Naive thymus-derived CD4-positive, alpha-beta T cell (primary cell): ENCODE measurements at regions of chr3 and their contacts with region 1.

Region 1: DNA sequence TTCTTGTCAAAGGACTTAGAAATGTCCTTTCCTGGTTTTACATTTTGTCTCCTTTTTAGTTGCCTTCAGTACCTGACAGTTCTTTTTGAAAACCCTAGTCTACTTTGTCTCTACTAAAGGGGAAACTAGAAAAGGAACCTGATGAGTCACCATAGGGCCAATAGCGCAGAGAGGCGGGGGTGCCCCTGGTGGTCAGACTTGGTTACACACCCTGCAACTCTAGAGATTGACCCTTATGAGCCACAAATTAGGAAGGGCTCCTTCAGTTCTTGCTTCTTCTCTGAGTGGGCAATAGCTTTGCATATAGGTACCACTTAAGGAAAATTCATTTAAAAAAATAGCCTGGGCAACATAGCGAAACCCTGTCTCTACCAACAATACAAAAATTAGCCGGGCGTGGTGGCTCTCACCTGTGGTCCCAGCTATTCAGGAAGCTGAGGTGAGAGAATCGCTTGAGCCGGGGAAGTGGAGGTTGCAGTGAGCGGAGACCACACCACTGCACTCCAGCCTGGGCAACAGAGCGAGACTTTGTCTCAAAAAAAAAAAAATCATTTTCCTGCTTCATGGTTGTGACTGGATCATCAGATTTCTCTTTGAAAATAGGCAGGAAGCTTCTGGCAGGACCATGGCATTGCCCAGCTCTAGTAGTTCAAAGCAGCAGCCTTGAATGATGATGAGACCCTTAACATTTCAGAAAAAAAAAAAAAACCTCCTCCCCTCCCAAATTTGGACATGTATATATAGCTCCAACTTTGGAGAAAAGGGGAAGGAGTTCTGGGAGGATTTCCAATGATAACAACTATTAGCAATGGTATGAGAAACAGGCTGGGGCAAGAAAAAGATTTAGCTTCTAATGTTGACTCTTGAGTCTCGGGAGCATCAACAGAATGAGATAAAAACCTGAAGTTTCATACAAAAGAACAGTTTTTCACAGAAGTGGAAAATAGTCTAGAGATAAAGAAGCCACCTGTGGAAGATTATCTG is 45.2 kb upstream of the RASA2 start:
- DNase-seq: peak; percentile 29 to 68 (median 64)
- ATAC-seq: peak; percentile 97
- H3K4me3 ChIP-seq: no peak overlapping the region
- H3K4me3 Mint-ChIP-seq: no peak overlapping the region
- H3K27ac ChIP-seq: no peak overlapping the region
- H3K27ac Mint-ChIP-seq: peak overlapping the region in 6 of 9 donors; percentile 14 to 79 (median 42)
- H3K4me1 ChIP-seq: peaks cover 0 to 13% of the 10 kb centered on the region in 2 donors
- H3K4me1 Mint-ChIP-seq: peaks cover 9 to 24% (median 24%) of the 10 kb centered on the region in 7 donors
- H3K27me3 ChIP-seq: no peaks in the 10 kb centered on the region
- H3K27me3 Mint-ChIP-seq: no peaks in the 10 kb centered on the region

Region 2: DNA sequence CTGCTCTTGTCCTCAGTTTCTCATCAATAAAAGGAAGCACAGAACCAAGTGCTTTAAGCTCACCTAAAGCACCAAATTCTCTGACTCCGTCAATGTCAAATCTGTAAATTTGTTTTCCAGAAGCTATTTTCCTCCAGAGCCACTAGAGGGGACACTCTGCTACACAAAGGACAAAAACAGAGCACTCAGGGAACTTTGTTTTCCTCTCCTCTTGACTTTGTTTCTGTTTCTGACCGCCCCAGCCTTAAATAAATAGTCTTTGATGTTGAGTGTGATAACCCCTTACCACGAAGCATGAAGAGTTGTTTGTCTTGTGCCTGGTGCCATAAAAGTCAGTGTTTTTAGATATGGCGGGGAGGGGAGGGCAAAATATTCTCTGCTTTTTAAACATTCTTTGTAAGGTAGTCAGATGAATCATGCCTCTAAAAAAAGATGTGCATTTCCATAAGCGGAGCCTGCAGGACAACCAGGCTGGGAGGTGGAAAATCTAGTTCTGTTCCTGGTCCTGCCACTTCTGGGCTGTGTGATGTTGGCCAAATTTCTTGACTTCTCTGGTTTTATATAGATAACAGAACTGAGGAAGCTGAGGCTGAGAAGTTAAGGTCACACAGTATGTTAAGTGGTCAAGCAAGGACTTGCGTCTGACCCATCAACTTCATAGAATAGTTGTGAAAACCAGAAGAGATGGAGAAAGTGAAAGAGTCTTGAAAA is 80.6 kb before region 1 on chr3:
- CTCF ChIA-PET with region 1: interaction called, 25 read pairs
- POLR2A ChIA-PET with region 1: interaction called, 5 read pairs
- intact Hi-C with region 1: loop called (anchors 1 kb)
- DNase-seq: peak in 7 of 9 donors; percentile 20 to 56 (median 45)
- ATAC-seq: peak; percentile 83
- H3K4me3 ChIP-seq: no peak overlapping the region
- H3K4me3 Mint-ChIP-seq: peak overlapping the region in 4 of 10 donors; percentile 16 to 40 (median 28)
- H3K27ac ChIP-seq: no peak overlapping the region
- H3K27ac Mint-ChIP-seq: peak overlapping the region in 2 of 9 donors; percentile 26 to 51
- H3K4me1 ChIP-seq: no peaks in the 10 kb centered on the region
- H3K4me1 Mint-ChIP-seq: peaks cover 5 to 9% (median 7%) of the 10 kb centered on the region in 7 donors
- H3K27me3 ChIP-seq: no peaks in the 10 kb centered on the region
- H3K27me3 Mint-ChIP-seq: peaks cover 0 to 11% (median 0%) of the 10 kb centered on the region in 5 donors

Region 3: GRCh38 chr3:141402476-141403171 is 39.0 kb before region 1 on chr3:
- CTCF ChIA-PET with region 1: interaction called, 11 read pairs
- POLR2A ChIA-PET with region 1: interaction called, 4 read pairs
- intact Hi-C with region 1: loop called (anchors 1 to 5 kb)
- DNase-seq: peak; percentile 35 to 62 (median 51)
- ATAC-seq: peak; percentile 70
- H3K4me3 ChIP-seq: peak overlapping the region; percentile 80
- H3K4me3 Mint-ChIP-seq: peak overlapping the region; percentile 83 to 96 (median 92)
- H3K27ac ChIP-seq: peak overlapping the region; percentile 94
- H3K27ac Mint-ChIP-seq: peak overlapping the region; percentile 75 to 97 (median 94)
- H3K4me1 ChIP-seq: peaks cover 14 to 48% of the 10 kb centered on the region in 2 donors
- H3K4me1 Mint-ChIP-seq: peaks cover 20 to 69% (median 46%) of the 10 kb centered on the region in 7 donors
- H3K27me3 ChIP-seq: no peaks in the 10 kb centered on the region
- H3K27me3 Mint-ChIP-seq: no peaks in the 10 kb centered on the region

Region 4: GRCh38 chr3:141426404-141427034 is 15.2 kb before region 1 on chr3:
- CTCF ChIA-PET with region 1: interaction called, 13 read pairs
- POLR2A ChIA-PET with region 1: interaction called, 3 read pairs
- intact Hi-C with region 1: loop called in 1 of 2 experiments (anchors 2 kb)
- DNase-seq: no peak
- ATAC-seq: no peak
- H3K4me3 ChIP-seq: no peak overlapping the region
- H3K4me3 Mint-ChIP-seq: no peak overlapping the region
- H3K27ac ChIP-seq: no peak overlapping the region
- H3K27ac Mint-ChIP-seq: peak overlapping the region in 1 of 9 donors; percentile 65
- H3K4me1 ChIP-seq: peaks cover 0 to 8% of the 10 kb centered on the region in 2 donors
- H3K4me1 Mint-ChIP-seq: peaks cover 3 to 34% (median 16%) of the 10 kb centered on the region in 7 donors
- H3K27me3 ChIP-seq: no peaks in the 10 kb centered on the region
- H3K27me3 Mint-ChIP-seq: no peaks in the 10 kb centered on the region